T-cell (primary cell): ENCODE measurements at regions of chr6 and their contacts with region 1.

Region 1: GRCh38 chr6:149565527-149566409 is at the start of gene GINM1:
- DNase-seq: peak; percentile 86 to 98 (median 92)
- ATAC-seq: peak; percentile 87 to 91 (median 88)
- H3K4me3 ChIP-seq: peak within 1 kb of the TSS; percentile 90 to 98
- H3K4me3 Mint-ChIP-seq: peak within 1 kb of the TSS; percentile 93 to 95 (median 94)
- H3K27ac ChIP-seq: peak within 1 kb of the TSS; percentile 82
- H3K27ac Mint-ChIP-seq: peak within 1 kb of the TSS; percentile 94
- H3K4me1 ChIP-seq: peaks cover 3 to 15% of the 10 kb centered on the region in 2 experiments
- H3K4me1 Mint-ChIP-seq: peaks cover 15 to 27% (median 27%) of the 10 kb centered on the region in 3 donors
- H3K27me3 ChIP-seq: no peaks in the 10 kb centered on the region
- H3K27me3 Mint-ChIP-seq: no peaks in the 10 kb centered on the region
- total RNA-seq, gene GINM1: 15.4 to 24.5 (median 15.7) TPM

Region 2: GRCh38 chr6:149545754-149546528 is 19.8 kb before region 1 on chr6 and contains the start of gene PPIL4:
- CTCF ChIA-PET with region 1: interaction called, 7 to 16 read pairs
- POLR2A ChIA-PET with region 1: interaction called, 3 to 6 read pairs
- DNase-seq: peak; percentile 87 to 99 (median 95)
- ATAC-seq: peak; percentile 92 to 96 (median 94)
- H3K4me3 ChIP-seq: peak within 1 kb of the TSS; percentile 71 to 96
- H3K4me3 Mint-ChIP-seq: peak within 1 kb of the TSS; percentile 89 to 99 (median 98)
- H3K27ac ChIP-seq: peak within 1 kb of the TSS; percentile 97
- H3K27ac Mint-ChIP-seq: peak within 1 kb of the TSS; percentile 98
- H3K4me1 ChIP-seq: peaks cover 21 to 28% of the 10 kb centered on the region in 2 experiments
- H3K4me1 Mint-ChIP-seq: peaks cover 37 to 45% (median 44%) of the 10 kb centered on the region in 3 donors
- H3K27me3 ChIP-seq: no peaks in the 10 kb centered on the region
- H3K27me3 Mint-ChIP-seq: peaks cover 0 to 8% of the 10 kb centered on the region in 2 donors
- total RNA-seq, gene PPIL4: 25.2 to 32.1 (median 26.6) TPM

Region 3: GRCh38 chr6:149593443-149593842 is 27.7 kb after region 1 on chr6:
- CTCF ChIA-PET with region 1: interaction called in 1 of 2 experiments, 6 read pairs
- POLR2A ChIA-PET with region 1: interaction called, 8 to 10 read pairs
- DNase-seq: no peak
- ATAC-seq: no peak
- H3K4me3 ChIP-seq: no peak overlapping the region
- H3K4me3 Mint-ChIP-seq: no peak overlapping the region
- H3K27ac ChIP-seq: no peak overlapping the region
- H3K27ac Mint-ChIP-seq: no peak overlapping the region
- H3K4me1 ChIP-seq: no peaks in the 10 kb centered on the region
- H3K4me1 Mint-ChIP-seq: no peaks in the 10 kb centered on the region
- H3K27me3 ChIP-seq: no peaks in the 10 kb centered on the region
- H3K27me3 Mint-ChIP-seq: no peaks in the 10 kb centered on the region

Region 4: GRCh38 chr6:149717588-149718458 is 152.1 kb after region 1 on chr6 and contains the start of gene LATS1:
- CTCF ChIA-PET with region 1: no interaction called
- POLR2A ChIA-PET with region 1: no interaction called
- DNase-seq: peak; percentile 79 to 96 (median 90)
- ATAC-seq: peak; percentile 93 to 96 (median 94)
- H3K4me3 ChIP-seq: peak within 1 kb of the TSS; percentile 77 to 88
- H3K4me3 Mint-ChIP-seq: peak within 1 kb of the TSS; percentile 94 to 97 (median 96)
- H3K27ac ChIP-seq: peak within 1 kb of the TSS; percentile 84
- H3K27ac Mint-ChIP-seq: peak within 1 kb of the TSS; percentile 97 to 98
- H3K4me1 ChIP-seq: peaks cover 16 to 19% of the 10 kb centered on the region in 2 experiments
- H3K4me1 Mint-ChIP-seq: peaks cover 40 to 52% (median 41%) of the 10 kb centered on the region in 3 donors
- H3K27me3 ChIP-seq: no peaks in the 10 kb centered on the region
- H3K27me3 Mint-ChIP-seq: no peaks in the 10 kb centered on the region
- total RNA-seq, gene LATS1: 38.0 to 43.3 (median 39.2) TPM